Lower leg skin (tissue), 4 donors: ENCODE measurements at regions of chr20 and their contacts with region 1.

Region 1: DNA sequence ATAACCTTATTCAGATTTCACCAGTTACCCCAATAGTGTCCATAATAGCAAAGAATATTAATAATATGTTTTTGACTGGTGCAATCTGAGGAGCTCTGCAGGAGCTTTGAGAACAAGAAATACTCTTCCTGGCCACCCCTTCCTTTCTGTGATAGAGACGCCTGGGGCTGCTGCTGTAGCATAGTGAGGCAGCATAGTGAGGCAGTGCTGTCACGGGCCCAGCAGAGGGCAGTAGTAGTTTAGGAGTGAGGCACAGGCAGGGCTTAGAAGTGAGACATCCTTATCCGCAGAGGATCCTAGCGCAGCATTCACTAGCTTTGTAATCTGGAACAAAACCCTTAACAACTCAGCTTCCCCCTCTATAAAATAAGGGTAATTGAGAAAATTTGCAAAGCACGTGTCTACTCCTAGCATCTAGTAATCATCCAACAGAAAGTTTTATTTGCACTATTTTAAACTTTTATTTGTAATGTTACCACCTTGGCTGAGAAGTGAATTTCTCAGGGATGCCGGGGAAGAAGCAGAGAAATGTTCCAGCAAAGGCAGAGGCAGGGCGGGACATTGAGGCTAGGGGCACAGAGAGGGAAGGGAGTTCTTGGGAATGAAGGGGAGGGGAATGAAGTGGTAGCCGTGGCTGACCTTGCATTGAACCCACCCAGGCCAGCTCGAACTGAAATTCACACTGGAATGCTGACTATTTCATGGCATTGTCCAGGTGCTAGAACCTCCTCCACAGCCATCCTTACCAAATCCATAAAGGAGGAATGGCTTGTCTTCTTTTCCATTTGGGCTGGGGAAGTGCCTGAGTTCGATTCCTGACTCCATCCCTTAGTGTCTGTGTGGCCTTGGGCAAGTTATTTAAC is 78.8 kb downstream of the CDS2 start:
- DNase-seq: peak; percentile 57 to 85
- H3K4me3 ChIP-seq: no peak overlapping the region
- CTCF ChIP-seq: peak in 1 of 3 donors; percentile 20
- POLR2A ChIP-seq: no peak

Region 2: DNA sequence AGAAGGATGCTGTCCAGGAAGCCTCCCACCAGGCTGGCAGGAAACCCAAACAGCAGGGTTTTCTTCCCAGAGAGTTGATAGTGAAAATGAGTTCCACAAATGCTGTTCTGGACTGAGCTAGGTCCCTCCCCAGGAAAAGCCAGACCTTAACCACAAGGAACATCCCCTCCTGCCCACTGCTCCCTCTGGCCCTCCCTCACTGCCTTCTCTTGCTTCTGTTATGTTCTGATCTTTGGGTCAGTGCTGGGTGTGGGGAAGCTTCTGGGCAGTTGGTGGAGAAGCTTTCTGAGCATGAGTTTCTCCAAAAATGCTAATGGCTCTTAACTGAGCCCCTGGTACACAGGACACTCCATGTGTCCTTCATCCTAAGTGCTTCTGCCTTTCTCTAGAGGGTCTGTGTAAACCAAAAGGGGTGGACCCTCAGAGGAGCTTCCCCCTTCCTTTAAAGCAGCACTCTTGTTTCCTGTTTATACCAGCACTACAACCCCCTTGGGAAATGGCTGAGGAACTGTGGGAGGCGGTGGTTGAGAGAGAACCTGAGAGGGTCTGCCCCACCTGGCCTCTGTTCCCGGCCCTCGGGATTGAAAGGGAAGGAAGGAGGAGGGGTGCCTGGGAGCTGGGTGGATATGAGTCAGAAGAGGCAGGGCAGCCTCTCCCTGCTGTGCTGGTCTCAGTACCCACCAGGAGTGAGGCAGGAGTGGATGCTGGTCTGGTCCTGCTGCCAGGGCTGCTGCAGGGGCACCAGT is 36.8 kb before region 1 on chr20:
- intact Hi-C with region 1: loop called (anchors 1 kb)
- DNase-seq: no peak
- H3K4me3 ChIP-seq: no peak overlapping the region
- CTCF ChIP-seq: no peak
- POLR2A ChIP-seq: no peak

Region 3: GRCh38 chr20:5448449-5449118 is 243.0 kb after region 1 on chr20:
- intact Hi-C with region 1: loop called (anchors 1 kb)
- DNase-seq: peak in 1 of 2 donors; percentile 31
- H3K4me3 ChIP-seq: no peak overlapping the region
- CTCF ChIP-seq: no peak
- POLR2A ChIP-seq: no peak